H1 (cell line): ENCODE measurements at regions of chr10 and their contacts with region 1.

Region 1: DNA sequence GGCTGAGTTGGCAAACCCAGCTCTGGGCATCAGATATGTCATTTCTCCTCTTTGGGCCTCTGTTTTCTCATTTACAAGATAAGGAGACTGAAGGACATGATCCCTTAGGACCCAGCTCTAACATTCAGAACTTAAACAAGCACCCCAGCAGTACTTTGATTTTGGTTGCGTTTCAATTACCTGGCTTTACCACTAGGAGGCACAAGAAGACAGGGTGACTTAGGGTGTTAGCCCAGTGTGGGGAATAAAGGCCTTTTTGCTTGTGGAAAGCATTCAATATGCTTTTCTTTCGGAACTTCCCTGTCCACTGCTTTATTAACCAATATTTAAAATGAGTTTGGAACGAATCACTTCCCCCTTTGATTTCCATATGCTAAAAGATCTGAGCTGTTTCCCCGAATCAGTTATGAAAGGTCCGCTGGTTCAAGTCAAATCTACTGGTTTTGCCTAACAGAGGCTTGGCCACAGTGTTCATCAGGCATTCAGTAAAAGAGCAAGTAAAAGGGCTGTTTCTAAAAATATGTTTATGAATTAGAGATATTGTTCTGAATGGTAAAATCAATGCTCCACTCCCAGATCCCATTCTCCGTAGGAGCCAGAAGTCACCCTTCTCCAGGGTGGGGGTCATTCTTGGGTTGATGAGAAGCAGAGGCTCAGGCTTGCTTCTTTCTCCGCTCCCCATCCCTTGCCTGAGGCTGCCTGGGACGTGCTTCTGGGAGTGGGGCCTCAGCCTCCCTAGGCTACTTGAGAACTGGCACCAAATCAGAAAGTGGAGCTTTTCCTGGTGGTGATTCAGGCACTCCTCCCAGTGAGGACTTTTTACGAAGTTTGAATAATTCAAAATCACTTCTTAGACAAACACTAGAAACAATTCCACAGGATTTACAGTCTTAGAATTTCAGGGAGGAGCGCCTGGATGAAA is 105.5 kb downstream of the MYOF start:
- DNase-seq: no peak
- H3K4me3 ChIP-seq: no peak overlapping the region
- H3K27ac ChIP-seq: no peak overlapping the region
- H3K4me1 ChIP-seq: 0 out of 7 replicates have a peak, but pooled peaks cover 0 to 3% (median 0%) of the 10 kb centered on the region in 4 experiments
- H3K27me3 ChIP-seq: no peaks in the 10 kb centered on the region; a peak in 1 of 7 replicates
- CTCF ChIP-seq: peak in 2 of 3 experiments; percentile 91 to 93; a peak in 3 of 4 replicates
- EP300 ChIP-seq: no peak
- POLR2A ChIP-seq: no peak
- RAD21 ChIP-seq: peak; percentile 98 to 99

Region 2: GRCh38 chr10:93313798-93314197 is 62.8 kb before region 1 on chr10:
- CTCF ChIA-PET with region 1: no interaction called
- POLR2A ChIA-PET with region 1: no interaction called
- DNase-seq: no peak
- H3K4me3 ChIP-seq: no peak overlapping the region
- H3K27ac ChIP-seq: no peak overlapping the region
- H3K4me1 ChIP-seq: no peaks in the 10 kb centered on the region
- H3K27me3 ChIP-seq: no peaks in the 10 kb centered on the region
- CTCF ChIP-seq: no peak
- EP300 ChIP-seq: no peak
- POLR2A ChIP-seq: no peak
- RAD21 ChIP-seq: no peak

Region 3: GRCh38 chr10:93352638-93353383 is 23.8 kb before region 1 on chr10:
- CTCF ChIA-PET with region 1: interaction called, 20 read pairs
- POLR2A ChIA-PET with region 1: no interaction called
- DNase-seq: no peak
- H3K4me3 ChIP-seq: no peak overlapping the region
- H3K27ac ChIP-seq: no peak overlapping the region
- H3K4me1 ChIP-seq: peaks cover 0 to 5% (median 2%) of the 10 kb centered on the region in 4 experiments; a peak in 3 of 7 replicates
- H3K27me3 ChIP-seq: peaks cover 0 to 3% (median 0%) of the 10 kb centered on the region in 4 experiments; a peak in 1 of 7 replicates
- CTCF ChIP-seq: peak in 2 of 3 experiments; percentile 40 to 44; a peak in 2 of 4 replicates
- EP300 ChIP-seq: no peak
- POLR2A ChIP-seq: no peak
- RAD21 ChIP-seq: peak; percentile 66 to 68

Region 4: DNA sequence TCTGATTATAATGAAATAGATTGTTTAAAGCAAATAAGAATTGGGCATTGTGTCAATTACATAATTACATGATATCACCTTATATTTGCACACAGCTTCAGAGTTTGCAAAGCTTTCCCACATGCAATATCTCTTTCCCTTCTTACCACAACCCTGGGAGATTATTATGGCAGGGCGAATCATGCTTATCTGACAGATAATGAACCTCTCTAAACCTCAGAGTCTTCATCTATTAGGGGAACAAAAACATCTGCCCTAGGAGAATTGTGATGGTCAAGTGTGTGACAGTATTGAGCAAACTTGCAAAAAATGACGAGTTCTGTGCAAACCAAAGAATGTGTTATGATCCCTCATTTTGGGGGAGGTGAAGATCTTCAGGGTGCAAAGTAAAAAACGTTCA is 15.5 kb after region 1 on chr10:
- CTCF ChIA-PET with region 1: interaction called, 81 read pairs
- POLR2A ChIA-PET with region 1: interaction called, 6 read pairs
- DNase-seq: no peak
- H3K4me3 ChIP-seq: no peak overlapping the region
- H3K27ac ChIP-seq: no peak overlapping the region
- H3K4me1 ChIP-seq: peaks cover 0 to 3% (median 0%) of the 10 kb centered on the region in 4 experiments; a peak in 2 of 7 replicates
- H3K27me3 ChIP-seq: no peaks in the 10 kb centered on the region
- CTCF ChIP-seq: no peak
- EP300 ChIP-seq: no peak
- POLR2A ChIP-seq: no peak
- RAD21 ChIP-seq: no peak

Region 5: DNA sequence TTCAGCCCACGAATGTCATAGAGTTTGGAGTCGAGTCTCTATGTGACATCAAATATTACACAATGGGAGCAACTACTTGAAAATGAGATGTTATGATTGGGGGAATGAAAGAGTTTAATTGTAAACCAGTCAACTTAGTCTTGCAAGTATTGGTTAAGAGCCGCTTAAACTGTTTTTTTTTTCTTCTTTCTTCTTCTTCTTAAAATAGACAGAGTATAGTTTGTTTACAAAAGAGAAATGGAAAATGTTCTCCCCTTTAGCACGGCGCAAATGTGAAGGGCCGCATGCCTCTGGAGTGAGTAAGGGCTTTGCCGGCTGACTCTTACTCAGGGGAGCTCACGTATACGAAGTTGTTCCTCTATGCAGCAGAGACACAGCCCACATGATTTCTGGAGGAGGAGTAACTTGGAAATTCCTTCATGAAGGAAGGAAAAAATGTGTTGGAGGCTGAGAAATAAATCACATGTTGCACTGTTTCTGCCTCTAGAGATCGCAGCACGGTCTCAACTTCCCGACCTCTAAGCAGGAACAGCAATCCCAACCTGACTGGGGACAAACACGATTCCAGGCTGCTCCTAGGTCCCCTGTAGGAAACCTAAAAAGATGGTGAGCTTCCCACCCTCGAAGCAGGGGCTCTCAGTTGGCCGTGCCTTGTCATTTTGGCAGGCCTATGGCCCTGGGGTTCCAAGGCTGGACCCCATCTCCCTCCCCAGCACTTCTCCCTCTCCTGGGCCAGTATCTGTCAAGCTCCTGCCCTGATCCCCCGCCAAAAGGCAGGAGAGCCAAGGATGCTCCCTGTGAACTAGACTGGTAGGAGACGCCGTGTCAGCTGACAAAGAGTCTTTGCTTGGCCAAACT is 60.7 kb after region 1 on chr10:
- CTCF ChIA-PET with region 1: interaction called, 23 read pairs
- POLR2A ChIA-PET with region 1: interaction called, 12 read pairs
- DNase-seq: peak in 1 of 2 experiments; percentile 68
- H3K4me3 ChIP-seq: peak overlapping the region in 3 of 4 experiments; percentile 20 to 52 (median 31); a peak in 3 of 8 replicates
- H3K27ac ChIP-seq: peak overlapping the region; percentile 74
- H3K4me1 ChIP-seq: peaks cover 21 to 37% (median 34%) of the 10 kb centered on the region in 4 experiments
- H3K27me3 ChIP-seq: no peaks in the 10 kb centered on the region
- CTCF ChIP-seq: no peak
- EP300 ChIP-seq: peak in 1 of 2 experiments; percentile 52; a peak in 1 of 3 replicates
- POLR2A ChIP-seq: peak; percentile 48 to 75
- RAD21 ChIP-seq: no peak

Region 6: DNA sequence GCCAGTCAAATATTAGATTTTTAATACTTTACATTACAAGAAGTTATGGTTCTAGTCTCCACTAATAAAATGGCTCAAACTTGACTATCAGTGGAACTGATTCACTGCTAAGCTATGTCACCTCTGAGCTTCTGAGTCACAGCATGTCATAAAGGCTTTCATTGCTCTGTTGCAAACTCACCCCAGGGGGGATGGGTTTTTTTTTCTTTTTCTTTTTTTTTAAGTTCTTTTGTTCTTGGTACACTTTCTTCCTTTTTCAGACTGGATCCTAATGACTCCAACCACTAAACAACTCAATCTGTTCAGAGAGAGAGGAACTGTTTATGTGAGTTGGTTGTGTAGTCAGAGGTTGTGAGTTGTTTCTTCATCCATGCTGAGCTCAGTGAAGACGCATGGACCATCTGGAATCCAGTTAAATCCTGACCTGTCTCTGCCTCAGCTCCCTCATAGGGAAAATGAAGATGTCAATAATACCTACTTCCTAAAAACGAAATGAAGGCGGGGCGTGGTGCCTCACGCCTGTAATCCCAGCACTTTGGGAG is 94.5 kb after region 1 on chr10:
- CTCF ChIA-PET with region 1: interaction called, 63 read pairs
- POLR2A ChIA-PET with region 1: no interaction called
- DNase-seq: no peak
- H3K4me3 ChIP-seq: no peak overlapping the region
- H3K27ac ChIP-seq: no peak overlapping the region
- H3K4me1 ChIP-seq: peaks cover 0 to 3% (median 1%) of the 10 kb centered on the region in 4 experiments; a peak in 3 of 7 replicates
- H3K27me3 ChIP-seq: no peaks in the 10 kb centered on the region
- CTCF ChIP-seq: no peak
- EP300 ChIP-seq: no peak
- POLR2A ChIP-seq: no peak
- RAD21 ChIP-seq: no peak

Region 7: DNA sequence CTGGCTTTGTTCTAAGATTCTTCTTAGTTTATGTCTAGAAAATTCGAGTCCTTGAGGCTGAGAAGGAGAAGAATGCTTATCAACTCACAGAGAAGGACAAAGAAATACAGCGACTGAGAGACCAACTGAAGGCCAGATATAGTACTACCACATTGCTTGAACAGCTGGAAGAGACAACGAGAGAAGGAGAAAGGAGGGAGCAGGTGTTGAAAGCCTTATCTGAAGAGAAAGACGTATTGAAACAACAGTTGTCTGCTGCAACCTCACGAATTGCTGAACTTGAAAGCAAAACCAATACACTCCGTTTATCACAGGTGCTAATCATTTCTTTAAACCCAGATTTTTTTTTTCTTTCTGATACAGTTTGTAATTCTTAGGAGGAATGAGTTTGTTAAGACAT is 126.4 kb after region 1 on chr10:
- CTCF ChIA-PET with region 1: interaction called, 105 read pairs
- POLR2A ChIA-PET with region 1: no interaction called
- DNase-seq: no peak
- H3K4me3 ChIP-seq: no peak overlapping the region
- H3K27ac ChIP-seq: no peak overlapping the region
- H3K4me1 ChIP-seq: no peaks in the 10 kb centered on the region
- H3K27me3 ChIP-seq: no peaks in the 10 kb centered on the region
- CTCF ChIP-seq: no peak
- EP300 ChIP-seq: no peak
- POLR2A ChIP-seq: no peak
- RAD21 ChIP-seq: no peak